ENCODE measurements at regions of chr4 and their contacts with region 1.

Region 1: DNA sequence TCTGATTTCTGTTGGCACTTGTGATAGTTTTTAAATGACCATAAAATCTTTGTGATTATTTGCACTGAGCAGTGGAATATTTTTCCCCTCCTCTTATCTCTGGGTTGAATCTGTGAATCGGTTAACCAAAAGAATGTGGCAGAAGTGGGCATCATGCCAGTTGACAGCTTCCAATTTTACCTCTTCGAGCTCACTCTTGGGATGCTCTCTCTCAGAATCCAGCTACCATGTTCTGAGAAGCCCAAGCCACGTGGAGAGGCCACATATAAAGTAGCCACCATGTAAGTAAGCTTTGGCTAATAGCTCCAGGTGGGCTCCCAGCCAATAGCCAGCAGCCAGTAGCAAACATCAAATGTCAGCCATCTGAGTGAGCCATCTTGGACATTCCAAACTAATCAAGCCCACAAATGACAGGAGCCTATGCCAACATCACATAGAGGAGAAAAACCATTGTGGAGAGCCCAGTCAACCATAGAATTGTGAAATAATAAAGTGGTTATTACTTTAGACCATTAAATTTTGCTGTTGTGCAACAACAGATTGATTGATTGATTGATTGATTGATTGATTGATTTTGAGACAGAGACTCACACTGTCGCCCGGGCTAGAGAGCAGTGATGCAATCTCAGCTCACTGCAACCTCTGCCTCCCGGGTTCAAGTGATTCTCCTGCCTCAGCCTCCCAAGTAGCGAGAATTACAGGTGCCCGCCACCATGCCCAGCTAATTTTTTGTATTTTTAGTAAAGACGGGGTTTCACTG is 12.7 kb upstream of the WDR19 start:
- DNase-seq: no peak
- H3K4me3 ChIP-seq: no peak overlapping the region
- H3K27ac ChIP-seq: no peak overlapping the region
- H3K4me1 ChIP-seq: peaks cover 50% of the 10 kb centered on the region
- CTCF ChIP-seq: no peak

Region 2: DNA sequence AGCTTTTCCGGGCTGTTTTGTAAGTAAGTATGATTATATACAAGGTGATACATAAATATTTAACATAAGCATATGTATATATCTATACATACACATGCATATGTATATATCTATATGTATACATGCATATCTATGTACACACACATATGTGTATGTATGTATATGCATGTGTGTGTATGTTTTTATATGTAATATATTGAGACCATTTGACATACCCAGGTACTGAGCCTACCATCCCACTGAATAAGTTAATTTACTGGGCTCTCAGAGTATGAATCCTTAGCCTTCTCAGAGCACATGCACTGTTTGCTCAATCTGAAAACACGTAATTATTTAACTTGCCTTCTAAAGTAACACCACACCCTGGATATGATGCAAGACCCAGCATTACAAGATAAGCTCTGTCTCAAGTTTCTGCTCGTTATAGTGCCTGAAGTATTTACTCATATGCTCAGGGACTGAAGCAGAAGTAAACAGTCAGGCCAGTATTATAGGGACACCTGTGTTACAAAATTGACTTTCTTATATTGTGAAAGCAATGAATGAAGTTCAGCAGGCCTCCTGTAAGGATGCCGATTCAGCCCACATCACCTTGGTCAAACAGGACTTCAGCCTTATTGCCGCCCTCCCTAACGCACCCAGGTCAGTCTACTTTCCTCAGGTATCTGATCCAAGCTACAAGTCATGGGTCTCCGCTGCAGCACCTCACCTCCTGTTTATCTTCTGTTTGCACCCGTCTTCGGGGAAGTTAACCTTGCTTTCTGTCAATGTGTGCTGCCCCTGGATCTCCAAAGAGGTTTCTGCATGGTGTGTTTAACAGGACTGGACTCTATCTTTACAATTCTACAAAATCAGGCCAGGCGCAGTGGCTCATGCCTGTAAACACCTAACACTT is 548.6 kb before region 1 on chr4:
- CTCF ChIA-PET with region 1: no interaction called
- POLR2A ChIA-PET with region 1: no interaction called
- intact Hi-C with region 1: no loop called
- DNase-seq: no peak
- H3K4me3 ChIP-seq: no peak overlapping the region
- H3K27ac ChIP-seq: no peak overlapping the region
- H3K4me1 ChIP-seq: no peaks in the 10 kb centered on the region
- CTCF ChIP-seq: no peak

Region 3: GRCh38 chr4:38759113-38759789 is 410.4 kb before region 1 on chr4:
- CTCF ChIA-PET with region 1: no interaction called
- POLR2A ChIA-PET with region 1: interaction called, 6 read pairs
- intact Hi-C with region 1: loop called (anchors 5 kb)
- DNase-seq: peak; percentile 83
- H3K4me3 ChIP-seq: peak overlapping the region; percentile 18
- H3K27ac ChIP-seq: peak overlapping the region; percentile 99
- H3K4me1 ChIP-seq: peaks cover 63% of the 10 kb centered on the region
- CTCF ChIP-seq: peak; percentile 95

Region 4: GRCh38 chr4:39146211-39146610 is 23.4 kb before region 1 on chr4:
- CTCF ChIA-PET with region 1: no interaction called
- POLR2A ChIA-PET with region 1: interaction called, 30 read pairs
- intact Hi-C with region 1: no loop called
- DNase-seq: no peak
- H3K4me3 ChIP-seq: no peak overlapping the region
- H3K27ac ChIP-seq: no peak overlapping the region
- H3K4me1 ChIP-seq: peaks cover 7% of the 10 kb centered on the region
- CTCF ChIP-seq: no peak

Region 5: GRCh38 chr4:39181905-39182638 is 12.5 kb after region 1 on chr4 and contains the start of gene WDR19:
- CTCF ChIA-PET with region 1: interaction called, 5 read pairs
- POLR2A ChIA-PET with region 1: interaction called, 69 read pairs
- intact Hi-C with region 1: loop called (anchors 1 kb)
- DNase-seq: peak; percentile 100
- H3K4me3 ChIP-seq: peak within 1 kb of the TSS; percentile 83
- H3K27ac ChIP-seq: peak within 1 kb of the TSS; percentile 55
- H3K4me1 ChIP-seq: peaks cover 17% of the 10 kb centered on the region
- CTCF ChIP-seq: peak; percentile 81
- total RNA-seq, gene WDR19: 40.5 and 41.2 TPM in 2 replicates